T-cell (primary cell): ENCODE measurements at regions of chr17 and their contacts with region 1.

Region 1: GRCh38 chr17:40075201-40075941 is 12.6 kb downstream of the THRA start:
- DNase-seq: peak in 31 of 35 experiments; percentile 32 to 82 (median 61)
- ATAC-seq: peak; percentile 72 to 85 (median 80)
- H3K4me3 ChIP-seq: no peak overlapping the region
- H3K4me3 Mint-ChIP-seq: peak overlapping the region in 2 of 3 donors; percentile 36 to 47
- H3K27ac ChIP-seq: no peak overlapping the region
- H3K27ac Mint-ChIP-seq: peak overlapping the region; percentile 71 to 74
- H3K4me1 ChIP-seq: peaks cover 18 to 46% of the 10 kb centered on the region in 2 experiments
- H3K4me1 Mint-ChIP-seq: peaks cover 36 to 54% (median 48%) of the 10 kb centered on the region in 3 donors
- H3K27me3 ChIP-seq: no peaks in the 10 kb centered on the region
- H3K27me3 Mint-ChIP-seq: no peaks in the 10 kb centered on the region

Region 2: DNA sequence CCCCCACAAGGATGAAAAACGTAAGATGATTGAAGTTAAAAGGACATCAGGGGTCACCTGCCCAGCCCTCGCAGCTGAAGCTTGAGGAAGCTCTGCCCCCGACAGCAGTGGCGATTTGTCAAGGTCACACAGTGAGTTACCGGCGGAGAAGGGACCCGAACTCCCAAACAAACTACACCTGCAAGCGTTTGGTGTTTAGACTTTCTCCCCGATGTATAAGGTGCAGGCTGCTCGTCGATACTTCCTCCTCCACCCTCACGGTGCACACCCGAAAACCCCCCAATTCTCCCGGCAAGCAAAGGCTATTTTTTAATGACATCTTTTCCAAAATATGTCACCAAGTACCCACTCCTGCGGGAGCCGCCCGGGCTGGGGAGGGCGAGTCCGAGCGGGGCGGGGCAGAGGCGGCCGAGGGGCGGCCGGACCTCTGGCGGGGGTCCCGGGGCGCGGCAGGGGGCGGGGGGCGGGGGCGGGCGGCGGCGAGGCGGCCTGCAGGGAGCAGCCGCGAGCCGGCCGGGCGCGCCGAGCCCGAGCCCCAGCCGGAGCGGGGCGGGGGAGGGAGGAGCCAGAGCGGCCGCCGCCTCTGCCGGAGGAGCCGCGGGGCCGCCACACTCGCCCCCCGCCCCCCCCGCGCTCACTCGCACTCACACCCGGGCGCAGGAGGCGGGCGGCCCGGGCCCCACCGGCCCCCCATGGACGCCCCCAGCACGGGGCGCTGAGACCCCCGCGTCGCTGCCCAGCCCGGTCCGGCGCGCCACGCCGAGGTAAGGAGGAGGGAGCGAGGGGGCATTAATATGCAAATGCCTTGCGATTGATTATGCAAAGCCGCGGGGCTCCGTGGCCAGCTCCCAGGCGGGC is 12.8 kb before region 1 on chr17 and contains the start of gene THRA:
- CTCF ChIA-PET with region 1: interaction called, 15 to 16 read pairs
- POLR2A ChIA-PET with region 1: no interaction called
- DNase-seq: peak; percentile 34 to 86 (median 66)
- ATAC-seq: peak; percentile 91 to 93 (median 92)
- H3K4me3 ChIP-seq: peak within 1 kb of the TSS; percentile 84 to 97
- H3K4me3 Mint-ChIP-seq: peak within 1 kb of the TSS; percentile 88 to 91 (median 91)
- H3K27ac ChIP-seq: peak within 1 kb of the TSS; percentile 41
- H3K27ac Mint-ChIP-seq: peak within 1 kb of the TSS; percentile 90 to 96
- H3K4me1 ChIP-seq: peaks cover 12 to 47% of the 10 kb centered on the region in 2 experiments
- H3K4me1 Mint-ChIP-seq: peaks cover 46 to 50% (median 48%) of the 10 kb centered on the region in 3 donors
- H3K27me3 ChIP-seq: peaks cover 0 to 16% of the 10 kb centered on the region in 2 experiments
- H3K27me3 Mint-ChIP-seq: no peaks in the 10 kb centered on the region
- total RNA-seq, gene THRA: 30.4 to 54.0 (median 48.9) TPM